ENCODE measurements at regions of chr5 and their contacts with region 1.

Region 1: DNA sequence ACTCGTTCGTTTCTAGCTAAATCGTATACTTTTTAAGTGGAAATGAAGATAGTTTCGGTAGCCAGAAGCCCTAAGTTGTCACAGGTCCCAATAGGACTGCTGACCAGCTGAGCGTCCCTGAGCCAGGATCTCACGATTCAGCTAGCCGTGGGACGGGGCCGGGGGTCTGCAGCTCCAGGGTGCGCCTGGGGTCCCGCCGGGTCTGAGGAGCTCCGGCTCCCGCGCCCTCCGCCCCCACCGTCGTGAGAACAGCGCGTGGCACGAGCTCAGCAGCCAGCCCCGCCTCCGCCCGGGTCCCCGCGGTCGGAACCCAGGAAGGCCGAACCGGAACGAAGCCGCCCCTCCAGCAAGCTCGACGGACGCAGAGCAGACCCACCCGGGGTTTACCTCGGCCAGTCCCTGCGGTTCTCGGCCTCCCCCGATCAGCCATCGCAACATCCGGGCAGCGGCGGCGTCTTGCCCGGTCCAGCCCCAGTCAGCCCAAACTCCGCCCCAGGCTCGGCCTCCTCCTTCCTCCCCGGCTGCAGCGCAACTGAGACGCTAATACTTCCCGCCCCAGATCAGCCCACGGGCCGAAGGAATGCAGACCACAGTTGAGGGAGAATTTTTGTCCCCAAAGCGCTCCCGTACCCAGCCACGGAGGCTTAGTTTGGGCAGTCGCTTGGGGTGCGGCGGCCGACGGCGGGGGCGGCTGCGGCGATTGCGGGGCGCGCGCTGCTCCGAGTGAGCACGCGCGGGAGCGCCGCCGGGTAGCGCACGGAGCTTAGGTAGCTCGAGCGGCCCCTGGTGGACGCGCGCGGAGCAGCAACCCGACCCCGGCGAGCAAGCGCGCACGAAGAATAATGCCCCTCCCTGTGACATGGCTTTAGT is at the start of gene WDR41:
- DNase-seq: peak; percentile 89
- ATAC-seq: peak; percentile 88
- H3K4me3 Mint-ChIP-seq: peak within 1 kb of the TSS; percentile 82
- H3K27ac Mint-ChIP-seq: peak within 1 kb of the TSS; percentile 92
- H3K4me1 Mint-ChIP-seq: peaks cover 33% of the 10 kb centered on the region
- H3K27me3 Mint-ChIP-seq: no peaks in the 10 kb centered on the region
- total RNA-seq, gene WDR41: 33.2 to 35.7 TPM

Region 2: DNA sequence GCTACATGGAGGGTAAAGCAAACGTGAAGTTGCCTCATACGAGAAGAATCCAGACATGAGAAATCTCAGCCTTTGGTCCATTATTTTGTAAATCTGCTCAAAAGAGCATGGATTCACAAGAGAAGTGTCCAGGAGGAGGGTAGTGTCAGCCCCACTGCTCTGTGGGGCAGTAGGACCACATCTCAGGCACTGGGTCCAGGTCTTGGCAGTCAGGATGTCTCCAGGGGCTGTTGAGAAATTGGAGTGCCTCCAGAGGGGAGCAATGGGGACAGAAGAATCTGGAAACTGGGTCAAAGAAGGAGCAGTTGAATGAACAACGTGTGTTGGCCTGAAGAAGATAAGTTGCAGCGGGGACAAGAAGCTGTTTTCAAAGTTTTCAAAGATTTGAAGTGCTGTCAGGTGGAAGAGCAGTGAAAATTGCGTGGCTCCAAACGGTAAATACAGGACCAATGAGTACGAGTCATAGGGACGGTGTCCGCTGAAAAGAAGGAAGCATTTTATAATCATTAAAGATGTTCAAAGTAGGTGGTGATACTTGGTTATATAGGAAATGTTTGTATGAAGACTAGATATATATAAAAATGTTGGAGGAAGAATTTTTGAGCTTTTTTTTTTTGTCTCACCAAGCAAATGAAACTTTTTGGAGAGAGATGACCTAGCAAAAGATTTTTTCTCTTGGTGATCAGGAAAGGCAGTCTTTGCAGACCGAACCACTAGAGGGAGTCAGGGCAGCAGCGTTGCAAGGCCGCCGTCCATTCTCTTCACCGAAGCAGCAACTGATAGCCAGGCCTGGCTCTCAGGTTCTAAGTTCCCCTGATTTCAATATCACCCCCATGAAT is 347.8 kb before region 1 on chr5:
- CTCF ChIA-PET with region 1: interaction called, 21 read pairs
- DNase-seq: peak; percentile 69
- ATAC-seq: peak; percentile 33
- H3K4me3 Mint-ChIP-seq: no peak overlapping the region
- H3K27ac Mint-ChIP-seq: no peak overlapping the region
- H3K4me1 Mint-ChIP-seq: peaks cover 10% of the 10 kb centered on the region
- H3K27me3 Mint-ChIP-seq: peaks cover 10% of the 10 kb centered on the region

Region 3: DNA sequence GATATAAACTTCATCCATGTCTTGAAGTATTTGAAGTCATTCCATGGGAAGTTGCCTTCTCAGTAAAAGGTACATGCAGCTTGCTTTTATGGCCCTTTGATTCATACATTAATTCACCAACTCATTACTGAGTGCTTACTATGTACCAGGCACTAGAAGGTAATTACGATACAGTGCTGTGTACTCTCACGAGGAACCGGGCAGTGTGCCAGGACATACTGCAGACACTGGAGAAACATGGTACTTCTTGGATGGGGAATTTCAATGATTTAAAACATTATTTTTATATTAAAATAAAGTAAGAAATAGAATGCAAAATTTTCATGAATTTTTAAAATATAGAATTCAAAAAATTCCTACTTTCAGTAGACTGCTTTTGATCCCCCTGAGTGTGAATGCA is 71.5 kb after region 1 on chr5:
- CTCF ChIA-PET with region 1: no interaction called
- DNase-seq: no peak
- ATAC-seq: no peak
- H3K4me3 Mint-ChIP-seq: no peak overlapping the region
- H3K27ac Mint-ChIP-seq: no peak overlapping the region
- H3K4me1 Mint-ChIP-seq: no peaks in the 10 kb centered on the region
- H3K27me3 Mint-ChIP-seq: peaks cover 17% of the 10 kb centered on the region

Measured in activated CD8-positive, alpha-beta memory T cell treated with anti-CD3 and anti-CD28 coated beads, Interleukin-2, amount 10 ng/mL, durations not matched to agents 7 days and 5 days (primary cell).